Activated T-helper 1 cell treated with anti-CD3 and anti-CD28 coated beads, Interleukin-12 subunit alpha, Interleukin-12 subunit beta, Interleukin-2, Interleukin-4 antibody, amounts not matched to agents 30 ng/mL and 10 ng/mL and 1 ng/mL, durations not matched to agents 14 hours and 24 hours and 36 hours (primary cell): ENCODE measurements at regions of chr15 and their contacts with region 1.

Region 1: DNA sequence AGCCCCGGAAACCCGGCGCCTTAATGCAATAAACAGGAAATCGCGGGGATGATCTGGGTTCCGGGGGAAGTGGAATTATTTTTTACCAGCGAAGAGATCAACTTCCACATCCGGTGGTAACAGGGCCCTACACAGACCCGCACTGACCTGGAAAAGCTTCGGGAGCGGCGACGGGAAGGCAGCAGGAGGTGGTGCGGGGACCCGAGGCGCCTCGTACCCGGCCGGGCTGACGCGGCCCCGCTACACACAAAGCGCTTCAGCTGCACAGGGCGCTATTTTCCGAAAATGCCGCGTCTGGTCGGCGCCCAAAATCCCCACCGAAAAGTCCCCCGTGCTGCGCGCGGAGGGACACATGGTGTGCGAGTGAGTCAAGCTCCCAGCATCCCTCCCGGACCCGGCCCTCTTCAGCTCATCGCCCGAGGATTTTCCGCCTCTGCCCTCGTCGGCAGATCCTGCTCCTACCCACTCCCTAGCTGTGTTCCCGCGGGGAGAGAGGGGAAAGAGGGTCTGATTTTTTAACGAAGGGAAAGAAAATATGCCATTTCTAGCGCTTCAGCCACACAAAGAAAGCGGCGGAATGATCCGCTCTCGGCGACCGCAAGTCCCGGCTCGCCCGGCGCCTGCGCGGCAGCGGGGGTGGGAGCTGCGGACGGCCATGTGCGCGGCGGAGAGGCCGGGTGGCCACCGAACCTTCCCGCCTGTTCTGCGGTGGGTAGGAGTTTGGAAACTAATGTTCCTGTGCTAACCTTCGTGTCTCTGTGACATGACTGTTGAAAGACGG is at the start of gene GABPB1:
- DNase-seq: peak; percentile 87
- H3K4me3 Mint-ChIP-seq: peak within 1 kb of the TSS; percentile 100
- H3K27ac Mint-ChIP-seq: peak within 1 kb of the TSS; percentile 100
- H3K4me1 Mint-ChIP-seq: peaks cover 48% of the 10 kb centered on the region
- H3K27me3 Mint-ChIP-seq: no peaks in the 10 kb centered on the region
- total RNA-seq, gene GABPB1: 80.7 and 81.0 TPM in 2 replicates

Region 2: DNA sequence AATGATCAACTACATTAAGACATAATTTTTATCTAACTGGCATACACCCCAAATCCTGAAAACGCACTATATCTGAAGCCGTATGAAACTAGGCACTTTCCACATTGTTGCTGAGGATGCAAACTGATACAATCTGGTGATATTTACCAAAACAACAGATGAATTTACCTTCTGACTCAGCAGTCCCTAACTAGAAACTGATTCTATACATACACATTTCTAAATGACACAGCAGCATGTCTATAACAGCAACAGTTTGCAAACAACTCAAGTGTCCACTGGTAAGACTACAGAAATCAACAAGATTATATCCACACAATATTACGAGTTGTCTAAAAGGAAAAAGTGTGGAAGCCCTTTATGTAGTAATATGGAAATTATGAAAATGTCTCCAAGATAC is 1331.7 kb before region 1 on chr15:
- intact Hi-C with region 1: loop called (anchors 10 kb)
- DNase-seq: no peak
- H3K4me3 Mint-ChIP-seq: no peak overlapping the region
- H3K27ac Mint-ChIP-seq: peak overlapping the region; percentile 56
- H3K4me1 Mint-ChIP-seq: peaks cover 17% of the 10 kb centered on the region
- H3K27me3 Mint-ChIP-seq: no peaks in the 10 kb centered on the region

Region 3: DNA sequence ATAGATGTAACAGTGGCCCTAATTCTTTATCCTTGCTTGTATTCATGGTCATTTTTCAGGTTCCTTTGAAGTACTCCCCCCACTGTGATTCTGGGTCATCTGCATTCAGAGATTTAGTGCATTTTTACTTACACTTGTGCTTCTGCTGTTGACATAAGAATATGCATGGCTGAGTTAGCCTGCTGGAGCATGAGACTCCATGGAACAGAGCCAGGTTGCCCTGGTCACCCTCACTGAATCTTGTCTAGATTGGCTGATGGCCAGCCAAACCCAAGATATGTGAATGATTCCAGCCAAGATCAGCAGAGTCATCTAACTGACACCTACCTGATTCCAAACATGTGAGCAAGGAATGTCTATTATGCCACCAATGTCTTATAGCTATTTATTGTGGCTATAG is 709.1 kb before region 1 on chr15:
- intact Hi-C with region 1: no loop called
- DNase-seq: no peak
- H3K4me3 Mint-ChIP-seq: no peak overlapping the region
- H3K27ac Mint-ChIP-seq: no peak overlapping the region
- H3K4me1 Mint-ChIP-seq: no peaks in the 10 kb centered on the region
- H3K27me3 Mint-ChIP-seq: no peaks in the 10 kb centered on the region

Region 4: GRCh38 chr15:50247819-50248655 is 107.0 kb before region 1 on chr15:
- intact Hi-C with region 1: loop called (anchors 5 kb)
- DNase-seq: peak; percentile 59
- H3K4me3 Mint-ChIP-seq: peak overlapping the region; percentile 67
- H3K27ac Mint-ChIP-seq: peak overlapping the region; percentile 97
- H3K4me1 Mint-ChIP-seq: peaks cover 65% of the 10 kb centered on the region
- H3K27me3 Mint-ChIP-seq: no peaks in the 10 kb centered on the region

Region 5: DNA sequence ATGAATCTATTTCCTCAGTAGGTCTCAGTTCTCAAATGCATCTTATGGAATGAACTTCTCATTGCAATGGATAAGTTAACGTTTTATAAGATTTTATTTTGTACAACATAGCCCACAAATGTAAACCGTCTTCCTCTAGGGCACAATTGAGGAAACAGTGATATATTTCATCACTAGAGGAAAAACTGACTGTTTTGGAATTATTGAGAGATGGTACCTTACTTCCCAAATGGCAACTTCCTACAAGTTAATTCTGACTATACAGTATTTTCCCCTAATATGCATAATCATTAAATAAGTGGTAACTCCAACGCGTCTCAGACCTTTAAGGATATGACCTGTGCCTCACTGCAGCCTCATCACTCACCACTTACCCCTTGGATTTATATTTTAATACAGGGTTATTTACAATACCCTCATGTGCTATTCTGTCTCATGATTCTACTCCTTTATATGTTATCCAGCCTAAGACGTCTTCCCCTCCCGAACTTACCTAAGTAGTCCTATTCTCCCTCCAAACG is 13.4 kb before region 1 on chr15:
- intact Hi-C with region 1: loop called (anchors 1 kb)
- DNase-seq: no peak
- H3K4me3 Mint-ChIP-seq: no peak overlapping the region
- H3K27ac Mint-ChIP-seq: no peak overlapping the region
- H3K4me1 Mint-ChIP-seq: peaks cover 27% of the 10 kb centered on the region
- H3K27me3 Mint-ChIP-seq: no peaks in the 10 kb centered on the region

Region 6: DNA sequence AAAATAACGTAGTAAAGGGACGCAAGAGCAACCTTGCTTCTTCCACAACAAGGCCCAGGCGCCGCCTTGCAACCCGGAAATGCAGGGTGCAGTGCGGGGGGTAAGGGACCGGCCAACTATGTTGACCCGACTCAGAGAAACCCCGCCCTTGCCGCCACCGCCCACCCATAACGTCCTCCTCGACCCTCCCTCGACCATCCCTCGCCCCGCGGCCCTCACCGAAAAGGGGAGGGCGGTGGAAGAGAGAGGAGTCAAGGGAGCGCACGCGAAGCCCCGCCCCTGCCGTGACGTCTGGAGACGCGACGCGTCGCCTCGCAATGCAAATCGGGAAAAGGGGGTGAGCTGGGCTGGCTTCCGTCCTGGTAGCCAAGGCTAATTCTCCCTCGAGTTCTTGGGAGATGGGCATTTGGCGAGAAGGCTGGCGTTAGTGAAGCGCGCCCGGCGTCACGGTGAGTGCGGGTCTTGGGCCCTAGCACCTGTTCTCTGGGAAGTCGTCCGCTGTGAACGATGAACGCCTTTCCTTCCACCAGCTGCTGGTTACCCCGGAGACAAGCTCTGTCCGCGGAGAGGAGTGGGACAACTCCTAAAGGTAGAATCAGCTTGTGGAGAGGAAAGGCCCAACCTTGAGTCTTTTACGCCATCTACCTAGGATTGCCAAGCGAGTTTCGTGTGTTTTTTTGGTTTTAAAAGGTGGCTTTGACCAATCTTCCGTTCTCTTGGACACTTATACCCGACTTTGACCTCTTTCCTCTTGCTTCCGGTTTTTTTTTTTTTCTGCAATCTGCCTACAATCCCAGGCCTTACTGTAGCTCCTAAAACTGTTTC is 69.2 kb after region 1 on chr15 and contains the start of gene USP8:
- intact Hi-C with region 1: loop called (anchors 1 kb)
- DNase-seq: peak; percentile 92
- H3K4me3 Mint-ChIP-seq: peak within 1 kb of the TSS; percentile 98
- H3K27ac Mint-ChIP-seq: peak within 1 kb of the TSS; percentile 92
- H3K4me1 Mint-ChIP-seq: peaks cover 25% of the 10 kb centered on the region
- H3K27me3 Mint-ChIP-seq: no peaks in the 10 kb centered on the region
- total RNA-seq, gene USP8: 66.2 and 66.3 TPM in 2 replicates

Region 7: GRCh38 chr15:50562735-50563640 is 208.0 kb after region 1 on chr15:
- intact Hi-C with region 1: loop called (anchors 5 kb)
- DNase-seq: peak; percentile 8
- H3K4me3 Mint-ChIP-seq: peak overlapping the region; percentile 16
- H3K27ac Mint-ChIP-seq: peak overlapping the region; percentile 87
- H3K4me1 Mint-ChIP-seq: peaks cover 25% of the 10 kb centered on the region
- H3K27me3 Mint-ChIP-seq: no peaks in the 10 kb centered on the region